Sigmoid colon (tissue), 7 donors: ENCODE measurements at regions of chr18 and their contacts with region 1.

Region 1: DNA sequence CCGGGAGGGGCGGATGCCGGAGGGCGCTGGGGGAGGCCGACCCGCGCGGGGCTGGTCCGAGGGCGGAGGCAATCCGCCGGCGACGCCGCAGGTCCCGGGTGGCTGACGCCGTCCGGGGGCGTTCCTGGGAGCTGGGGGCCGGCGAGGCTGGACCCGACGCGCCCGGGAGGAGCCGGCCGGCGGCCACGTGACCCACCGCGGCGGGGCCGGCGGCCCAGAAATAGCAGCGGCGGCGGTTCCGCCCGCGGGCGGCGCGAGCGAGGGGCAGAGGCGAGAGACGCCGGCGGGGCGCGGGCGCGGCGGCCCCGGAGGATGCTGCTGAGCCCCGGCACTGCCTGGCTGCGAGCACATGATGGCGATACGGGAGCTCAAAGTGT is at the start of gene RAB31:
- DNase-seq: peak; percentile 94
- H3K4me3 ChIP-seq: peak within 1 kb of the TSS; percentile 82 to 98 (median 88)
- H3K27ac ChIP-seq: peak within 1 kb of the TSS; percentile 93 to 98 (median 94)
- H3K4me1 ChIP-seq: peaks cover 0 to 49% (median 31%) of the 10 kb centered on the region in 4 donors
- H3K27me3 ChIP-seq: no peaks in the 10 kb centered on the region
- CTCF ChIP-seq: no peak
- EP300 ChIP-seq: no peak
- POLR2A ChIP-seq: no peak
- total RNA-seq, gene RAB31: 52.0 to 74.6 (median 65.9) TPM

Region 2: DNA sequence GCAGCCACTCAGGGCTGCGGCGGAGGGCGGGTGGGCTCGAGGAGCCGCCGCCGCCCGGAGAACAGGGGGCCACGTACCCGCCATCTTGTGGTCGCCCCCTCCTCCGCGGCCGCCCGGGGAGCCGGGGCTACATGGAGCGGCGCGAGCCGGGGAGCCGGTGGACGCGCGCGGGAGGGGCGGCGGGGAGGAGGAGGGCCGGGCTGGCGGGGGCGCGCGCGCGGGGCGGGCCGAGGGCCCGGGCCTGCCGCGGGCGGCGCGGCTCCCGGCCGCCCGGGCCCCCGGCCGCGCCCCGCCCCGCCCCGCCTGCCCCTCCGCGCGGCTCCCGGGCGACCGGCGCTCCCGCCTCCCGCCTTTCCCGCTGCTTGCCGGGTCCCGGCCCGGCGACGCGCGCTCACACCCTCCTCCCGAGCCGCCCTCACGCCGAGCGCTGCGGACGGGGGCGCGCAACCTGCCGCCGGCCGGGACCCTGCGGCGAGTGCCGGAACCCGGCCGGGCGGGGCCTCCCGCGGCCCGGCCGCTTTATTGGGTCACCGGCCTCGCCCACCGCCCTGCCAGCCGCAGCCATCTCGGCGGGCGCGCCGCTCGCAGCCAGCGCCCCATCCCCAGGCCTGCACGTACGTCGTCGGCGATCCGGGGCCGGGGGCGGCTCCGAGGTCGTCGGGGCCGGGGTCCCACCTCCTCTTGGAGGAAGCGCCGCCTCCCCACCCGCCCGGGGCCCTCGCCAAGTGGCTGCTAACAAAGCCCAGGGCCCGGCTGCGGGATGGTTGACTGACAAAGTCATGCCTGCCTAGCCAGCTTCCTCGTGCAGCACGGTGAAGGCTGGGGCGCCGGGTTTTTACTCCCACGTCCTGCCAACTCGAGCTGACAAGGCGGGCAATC is 93.4 kb before region 1 on chr18 and contains the start of gene PPP4R1:
- intact Hi-C with region 1: loop called (anchors 2 kb)
- DNase-seq: peak; percentile 90
- H3K4me3 ChIP-seq: peak within 1 kb of the TSS; percentile 60 to 98 (median 92)
- H3K27ac ChIP-seq: peak within 1 kb of the TSS; percentile 96 to 99 (median 98)
- H3K4me1 ChIP-seq: peaks cover 0 to 47% (median 37%) of the 10 kb centered on the region in 4 donors
- H3K27me3 ChIP-seq: no peaks in the 10 kb centered on the region
- CTCF ChIP-seq: no peak
- EP300 ChIP-seq: no peak
- POLR2A ChIP-seq: no peak
- total RNA-seq, gene PPP4R1: 126 to 163 (median 153) TPM

Region 3: GRCh38 chr18:9839853-9840252 is 131.8 kb after region 1 on chr18:
- intact Hi-C with region 1: loop called (anchors 5 kb)
- DNase-seq: no peak
- H3K4me3 ChIP-seq: no peak overlapping the region
- H3K27ac ChIP-seq: peak overlapping the region in 2 of 4 donors; percentile 73 to 81
- H3K4me1 ChIP-seq: peaks cover 0 to 49% (median 43%) of the 10 kb centered on the region in 4 donors
- H3K27me3 ChIP-seq: no peaks in the 10 kb centered on the region
- CTCF ChIP-seq: no peak
- EP300 ChIP-seq: no peak
- POLR2A ChIP-seq: no peak

Region 4: GRCh38 chr18:9913526-9914333 is 205.7 kb after region 1 on chr18 and contains the start of gene VAPA:
- intact Hi-C with region 1: loop called (anchors 5 kb)
- DNase-seq: peak; percentile 98
- H3K4me3 ChIP-seq: peak within 1 kb of the TSS; percentile 89 to 95 (median 90)
- H3K27ac ChIP-seq: peak within 1 kb of the TSS; percentile 98 to 100 (median 100)
- H3K4me1 ChIP-seq: peaks cover 0 to 41% (median 34%) of the 10 kb centered on the region in 4 donors
- H3K27me3 ChIP-seq: no peaks in the 10 kb centered on the region
- CTCF ChIP-seq: no peak
- EP300 ChIP-seq: no peak
- POLR2A ChIP-seq: peak; percentile 95
- total RNA-seq, gene VAPA: 252 to 336 (median 291) TPM

Region 5: GRCh38 chr18:10519999-10520935 is 812.2 kb after region 1 on chr18:
- intact Hi-C with region 1: loop called (anchors 5 kb)
- DNase-seq: peak; percentile 95
- H3K4me3 ChIP-seq: peak overlapping the region in 1 of 4 donors; percentile 1
- H3K27ac ChIP-seq: peak overlapping the region; percentile 49 to 60 (median 54)
- H3K4me1 ChIP-seq: peaks cover 0 to 40% (median 21%) of the 10 kb centered on the region in 4 donors
- H3K27me3 ChIP-seq: no peaks in the 10 kb centered on the region
- CTCF ChIP-seq: peak; percentile 71 to 89 (median 73)
- EP300 ChIP-seq: no peak
- POLR2A ChIP-seq: no peak